ENCODE measurements at regions of chr4 and their contacts with region 1.

Region 1: DNA sequence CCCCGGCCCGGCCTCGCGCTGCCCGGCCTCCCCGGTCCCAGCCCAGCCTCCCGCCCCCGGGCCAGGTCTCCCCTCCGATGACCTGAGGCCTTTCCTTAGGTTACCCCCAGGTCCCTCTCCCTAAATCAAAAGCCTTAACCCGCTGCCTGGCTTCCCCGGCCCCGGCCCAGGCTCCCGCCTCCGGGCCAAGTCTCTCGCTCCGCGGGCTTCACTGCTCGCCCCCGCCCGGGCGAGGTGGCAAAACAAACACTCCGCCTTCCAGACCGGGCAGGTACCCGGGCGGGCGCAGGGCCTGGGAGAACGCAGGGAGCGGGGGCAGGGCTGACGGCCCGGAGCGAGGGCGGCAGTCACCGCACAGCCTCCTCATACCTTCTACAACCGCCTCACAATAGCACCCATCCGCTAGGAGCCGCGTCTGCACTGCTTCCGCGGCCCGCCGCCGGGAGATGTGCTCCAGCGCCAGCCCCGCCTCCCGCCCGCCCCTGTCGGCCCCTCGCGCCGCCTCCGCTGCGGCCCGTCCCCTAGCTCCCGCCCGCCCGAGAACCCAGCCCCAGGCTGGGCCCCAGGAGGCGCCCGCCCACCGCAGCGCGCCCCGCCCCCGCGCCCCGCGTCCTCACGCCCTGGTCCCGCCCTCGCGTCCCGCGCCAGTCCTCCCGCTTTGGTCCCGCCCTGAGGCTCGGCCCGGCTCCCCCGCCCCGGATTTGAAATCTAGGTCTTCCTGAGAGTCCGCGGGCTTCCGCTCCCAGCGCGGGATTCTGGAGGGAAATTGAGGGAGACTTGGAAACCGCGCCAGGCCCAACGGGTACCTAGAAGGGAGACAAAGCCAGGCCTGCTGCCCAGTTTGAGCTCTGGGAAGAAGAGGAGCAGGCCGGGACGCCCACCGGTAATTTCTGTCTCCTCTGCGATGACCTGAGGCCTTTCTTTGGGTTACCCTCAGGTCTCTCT is at the starts of genes CASP3 and PRIMPOL:
- DNase-seq: peak; percentile 96 to 99 (median 97)
- H3K4me3 ChIP-seq: peak within 1 kb of the TSS; percentile 65
- H3K27ac ChIP-seq: peak within 1 kb of the TSS; percentile 92 to 93
- H3K4me1 ChIP-seq: peaks cover 4% of the 10 kb centered on the region
- H3K27me3 ChIP-seq: no peaks in the 10 kb centered on the region
- CTCF ChIP-seq: peak in 2 of 3 donors; percentile 15 to 29
- EP300 ChIP-seq: no peak
- POLR2A ChIP-seq: peak; percentile 80
- total RNA-seq, gene CASP3: 10.2 to 14.0 (median 11.7) TPM
- total RNA-seq, gene PRIMPOL: 16.7 to 29.2 (median 18.6) TPM

Region 2: GRCh38 chr4:184053434-184053833 is 595.9 kb before region 1 on chr4:
- intact Hi-C with region 1: no loop called
- DNase-seq: no peak
- H3K4me3 ChIP-seq: no peak overlapping the region
- H3K27ac ChIP-seq: no peak overlapping the region
- H3K4me1 ChIP-seq: no peaks in the 10 kb centered on the region
- H3K27me3 ChIP-seq: no peaks in the 10 kb centered on the region
- CTCF ChIP-seq: no peak
- EP300 ChIP-seq: no peak
- POLR2A ChIP-seq: no peak

Region 3: DNA sequence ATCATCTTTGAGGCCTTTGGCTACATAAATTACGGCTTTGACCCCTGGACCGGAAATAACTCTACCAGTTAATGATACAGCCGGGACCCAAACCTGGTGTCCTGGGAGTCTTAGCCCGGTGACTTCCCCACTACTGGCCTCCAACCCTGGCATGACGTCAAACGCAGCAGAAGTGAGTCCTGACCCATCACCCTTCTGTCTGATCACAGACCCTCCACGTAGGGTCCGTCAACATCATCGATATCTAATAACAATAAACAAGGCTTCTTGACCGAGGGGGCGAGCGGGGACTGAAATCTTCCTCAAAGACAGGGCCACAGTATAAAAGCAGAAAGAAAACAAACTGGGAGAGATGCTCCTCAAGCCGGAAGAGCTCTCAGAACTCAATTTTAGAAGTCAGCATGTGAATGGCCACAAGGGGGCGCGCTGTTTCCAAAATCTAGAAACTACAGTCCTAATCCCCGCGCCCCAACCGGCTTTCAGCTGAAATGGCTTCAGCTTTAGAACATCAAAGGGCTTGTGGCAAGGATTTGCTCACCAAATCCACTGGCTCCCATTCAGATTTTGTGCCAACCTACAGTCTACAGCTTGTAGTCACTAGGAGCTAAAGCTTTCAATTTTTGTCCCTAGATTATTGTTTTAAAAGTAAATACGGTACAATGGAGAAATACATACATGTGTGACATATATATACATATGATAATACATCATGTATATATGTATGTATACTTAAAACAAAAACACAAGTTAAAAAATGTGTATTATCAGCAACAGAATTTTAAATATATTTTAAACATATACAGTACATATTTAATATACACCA is 385.2 kb before region 1 on chr4:
- intact Hi-C with region 1: loop called in 1 of 4 experiments (anchors 10 kb)
- DNase-seq: peak; percentile 87 to 96 (median 95)
- H3K4me3 ChIP-seq: no peak overlapping the region
- H3K27ac ChIP-seq: no peak overlapping the region
- H3K4me1 ChIP-seq: peaks cover 1% of the 10 kb centered on the region
- H3K27me3 ChIP-seq: no peaks in the 10 kb centered on the region
- CTCF ChIP-seq: peak; percentile 89 to 95 (median 93)
- EP300 ChIP-seq: no peak
- POLR2A ChIP-seq: no peak

Region 4: GRCh38 chr4:184287697-184288255 is 361.5 kb before region 1 on chr4:
- intact Hi-C with region 1: loop called in 1 of 4 experiments (anchors 5 kb)
- DNase-seq: no peak
- H3K4me3 ChIP-seq: no peak overlapping the region
- H3K27ac ChIP-seq: peak overlapping the region in 1 of 2 donors; percentile 57
- H3K4me1 ChIP-seq: peaks cover 8% of the 10 kb centered on the region
- H3K27me3 ChIP-seq: no peaks in the 10 kb centered on the region
- CTCF ChIP-seq: peak in 1 of 3 donors; percentile 25
- EP300 ChIP-seq: no peak
- POLR2A ChIP-seq: no peak

Measured in ovary (tissue), 10 donors.